Spleen (tissue), 13 donors: ENCODE measurements at regions of chr6 and their contacts with region 1.

Region 1: GRCh38 chr6:155174576-155175211 is 89.1 kb upstream of the CLDN20 start:
- DNase-seq: no peak
- H3K4me3 ChIP-seq: no peak overlapping the region
- H3K27ac ChIP-seq: no peak overlapping the region
- H3K4me1 ChIP-seq: peaks cover 0 to 24% (median 14%) of the 10 kb centered on the region in 6 donors
- H3K27me3 ChIP-seq: no peaks in the 10 kb centered on the region
- CTCF ChIP-seq: peak in 10 of 11 experiments; percentile 11 to 69 (median 54)
- POLR2A ChIP-seq: no peak

Region 2: DNA sequence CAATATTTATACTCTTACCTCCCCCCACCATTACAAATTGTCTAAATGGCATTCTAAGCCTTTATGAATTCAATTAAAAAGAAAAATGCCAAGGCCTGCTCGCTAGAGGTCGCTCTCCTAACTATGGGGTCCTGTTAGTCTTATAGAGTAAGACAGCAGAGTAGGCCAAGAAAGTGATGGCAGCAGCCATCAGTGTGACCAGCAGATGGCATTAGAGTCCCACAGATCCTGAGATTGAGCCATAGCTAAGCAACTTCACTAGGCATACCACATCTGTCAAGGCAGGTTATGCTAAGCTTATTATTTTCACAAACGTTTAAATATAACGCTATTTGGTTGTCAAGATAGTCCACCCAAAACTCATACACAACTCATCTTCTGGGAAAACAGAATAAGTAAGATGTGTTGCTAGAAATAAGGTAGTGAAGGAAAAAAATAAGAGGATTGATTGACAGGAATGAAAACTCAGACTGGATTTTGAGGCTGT is 499.0 kb before region 1 on chr6:
- intact Hi-C with region 1: loop called (anchors 10 kb)
- DNase-seq: peak; percentile 89
- H3K4me3 ChIP-seq: no peak overlapping the region
- H3K27ac ChIP-seq: no peak overlapping the region
- H3K4me1 ChIP-seq: peaks cover 0 to 7% (median 0%) of the 10 kb centered on the region in 6 donors
- H3K27me3 ChIP-seq: no peaks in the 10 kb centered on the region
- CTCF ChIP-seq: peak; percentile 94 to 100 (median 98)
- POLR2A ChIP-seq: no peak

Region 3: GRCh38 chr6:154868143-154868594 is 306.5 kb before region 1 on chr6:
- intact Hi-C with region 1: loop called (anchors 10 kb)
- DNase-seq: no peak
- H3K4me3 ChIP-seq: no peak overlapping the region
- H3K27ac ChIP-seq: no peak overlapping the region
- H3K4me1 ChIP-seq: no peaks in the 10 kb centered on the region
- H3K27me3 ChIP-seq: no peaks in the 10 kb centered on the region
- CTCF ChIP-seq: peak in 9 of 11 experiments; percentile 23 to 65 (median 49)
- POLR2A ChIP-seq: no peak

Region 4: DNA sequence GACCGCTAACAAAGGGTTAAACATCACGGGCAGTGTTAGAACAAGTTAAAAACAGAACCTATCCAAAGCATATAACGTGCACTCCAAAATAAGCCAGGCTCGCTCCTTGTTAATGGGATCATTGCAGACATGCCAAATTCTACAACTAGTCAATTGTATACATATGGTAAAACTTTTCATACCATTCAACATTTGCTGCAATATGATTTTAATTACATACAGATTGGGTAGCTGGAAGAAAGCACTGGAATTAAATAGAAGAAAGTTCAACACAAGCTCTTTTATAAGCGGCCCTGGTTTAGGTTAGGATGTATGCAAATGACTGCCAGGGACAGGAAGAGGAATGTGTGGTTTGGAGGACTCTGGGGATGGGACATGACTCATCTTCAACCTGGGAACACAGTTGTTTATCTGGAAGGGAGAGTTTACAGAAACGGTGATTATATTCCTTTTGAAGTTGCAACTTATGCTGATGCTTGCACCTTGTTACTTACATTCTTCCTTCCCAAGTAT is 242.1 kb before region 1 on chr6:
- intact Hi-C with region 1: loop called (anchors 5 kb)
- DNase-seq: no peak
- H3K4me3 ChIP-seq: no peak overlapping the region
- H3K27ac ChIP-seq: no peak overlapping the region
- H3K4me1 ChIP-seq: peaks cover 0 to 16% (median 7%) of the 10 kb centered on the region in 6 donors
- H3K27me3 ChIP-seq: no peaks in the 10 kb centered on the region
- CTCF ChIP-seq: no peak
- POLR2A ChIP-seq: no peak